Heart right ventricle (tissue), 16 donors: ENCODE measurements at regions of chr17 and their contacts with region 1.

Region 1: GRCh38 chr17:13002766-13003451 is 14.9 kb downstream of the ELAC2 start:
- DNase-seq: peak; percentile 77 to 81
- ATAC-seq: peak; percentile 81 to 95 (median 88)
- H3K4me3 ChIP-seq: no peak overlapping the region
- H3K27ac ChIP-seq: no peak overlapping the region
- H3K4me1 ChIP-seq: peaks cover 0 to 6% (median 0%) of the 10 kb centered on the region in 9 donors
- H3K27me3 ChIP-seq: no peaks in the 10 kb centered on the region
- CTCF ChIP-seq: peak; percentile 69 to 90 (median 83)

Region 2: DNA sequence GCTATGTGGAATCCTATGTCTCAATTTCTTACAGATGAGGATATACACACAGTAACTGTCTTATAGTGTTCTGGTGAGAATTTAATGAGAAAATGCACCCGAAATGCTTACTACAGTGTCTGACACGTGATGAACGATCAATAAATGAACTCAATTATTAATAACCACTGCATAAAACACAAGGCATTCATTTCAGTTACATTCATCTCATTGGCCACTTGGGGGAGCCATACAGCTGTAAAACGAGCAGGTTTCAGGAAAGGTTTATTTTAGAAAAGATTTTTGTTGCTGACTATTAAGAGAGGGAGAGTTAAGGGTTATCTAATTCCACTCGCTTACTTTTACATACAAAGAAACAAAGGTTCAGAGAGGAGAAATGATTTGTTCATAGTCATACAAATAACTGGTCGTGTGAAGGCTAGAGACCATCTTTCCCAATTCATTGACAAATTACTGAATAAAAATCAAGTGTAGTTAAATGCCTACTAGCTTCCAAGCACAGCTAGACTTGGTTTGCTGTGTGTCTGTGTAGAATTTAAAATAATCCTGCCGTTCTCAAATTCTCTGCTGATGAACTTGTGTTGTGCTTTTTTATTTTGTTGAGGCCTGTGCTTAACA is 822.2 kb before region 1 on chr17:
- intact Hi-C with region 1: loop called (anchors 2 to 10 kb)
- DNase-seq: peak in 1 of 2 donors; percentile 36
- ATAC-seq: peak in 2 of 8 donors; percentile 31 to 56
- H3K4me3 ChIP-seq: no peak overlapping the region
- H3K27ac ChIP-seq: no peak overlapping the region
- H3K4me1 ChIP-seq: no peaks in the 10 kb centered on the region
- H3K27me3 ChIP-seq: no peaks in the 10 kb centered on the region
- CTCF ChIP-seq: peak; percentile 48 to 79 (median 73)

Region 3: GRCh38 chr17:12536472-12536871 is 466.4 kb before region 1 on chr17:
- intact Hi-C with region 1: loop called in 2 of 10 experiments (anchors 10 kb)
- DNase-seq: no peak
- ATAC-seq: no peak
- H3K4me3 ChIP-seq: no peak overlapping the region
- H3K27ac ChIP-seq: no peak overlapping the region
- H3K4me1 ChIP-seq: no peaks in the 10 kb centered on the region
- H3K27me3 ChIP-seq: no peaks in the 10 kb centered on the region
- CTCF ChIP-seq: no peak

Region 4: GRCh38 chr17:12667299-12667958 is 335.5 kb before region 1 on chr17:
- intact Hi-C with region 1: loop called in 6 of 10 experiments (anchors 5 to 10 kb)
- DNase-seq: peak in 1 of 2 donors; percentile 54
- ATAC-seq: peak; percentile 65 to 84 (median 74)
- H3K4me3 ChIP-seq: peak overlapping the region; percentile 35 to 79 (median 67)
- H3K27ac ChIP-seq: peak overlapping the region; percentile 70 to 87 (median 78)
- H3K4me1 ChIP-seq: peaks cover 0 to 32% (median 12%) of the 10 kb centered on the region in 9 donors
- H3K27me3 ChIP-seq: peaks cover 0 to 45% (median 19%) of the 10 kb centered on the region in 7 donors
- CTCF ChIP-seq: peak in 8 of 9 donors; percentile 12 to 68 (median 51)

Region 5: DNA sequence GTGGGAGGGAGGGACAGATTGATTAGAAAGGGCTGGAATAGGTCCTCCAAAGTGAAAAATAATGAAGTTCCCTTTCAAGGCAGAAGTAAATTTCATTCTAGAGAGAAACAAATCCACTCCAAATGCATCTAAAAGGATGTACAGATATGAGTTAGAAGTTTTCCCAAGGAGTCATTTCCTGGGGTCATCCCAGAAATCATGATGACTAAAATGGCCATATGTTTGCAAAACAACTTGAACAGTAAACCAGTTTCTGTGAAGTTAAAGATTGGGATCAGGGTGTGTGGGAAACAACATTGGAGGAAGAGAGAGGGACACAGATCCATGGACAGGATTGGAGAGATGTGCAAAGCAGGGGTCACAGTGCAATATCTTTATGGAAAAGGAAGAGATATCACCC is 246.1 kb before region 1 on chr17:
- intact Hi-C with region 1: loop called in 2 of 10 experiments (anchors 10 kb)
- DNase-seq: no peak
- ATAC-seq: no peak
- H3K4me3 ChIP-seq: no peak overlapping the region
- H3K27ac ChIP-seq: peak overlapping the region in 1 of 10 donors; percentile 6
- H3K4me1 ChIP-seq: no peaks in the 10 kb centered on the region
- H3K27me3 ChIP-seq: no peaks in the 10 kb centered on the region
- CTCF ChIP-seq: no peak

Region 6: GRCh38 chr17:12928741-12929140 is 74.2 kb before region 1 on chr17:
- intact Hi-C with region 1: loop called in 3 of 10 experiments (anchors 5 to 10 kb)
- DNase-seq: no peak
- ATAC-seq: peak in 3 of 8 donors; percentile 44 to 53 (median 47)
- H3K4me3 ChIP-seq: no peak overlapping the region
- H3K27ac ChIP-seq: peak overlapping the region in 4 of 10 donors; percentile 3 to 61 (median 58)
- H3K4me1 ChIP-seq: peaks cover 0 to 24% (median 8%) of the 10 kb centered on the region in 9 donors
- H3K27me3 ChIP-seq: no peaks in the 10 kb centered on the region
- CTCF ChIP-seq: peak in 5 of 9 donors; percentile 15 to 30 (median 28)

Region 7: DNA sequence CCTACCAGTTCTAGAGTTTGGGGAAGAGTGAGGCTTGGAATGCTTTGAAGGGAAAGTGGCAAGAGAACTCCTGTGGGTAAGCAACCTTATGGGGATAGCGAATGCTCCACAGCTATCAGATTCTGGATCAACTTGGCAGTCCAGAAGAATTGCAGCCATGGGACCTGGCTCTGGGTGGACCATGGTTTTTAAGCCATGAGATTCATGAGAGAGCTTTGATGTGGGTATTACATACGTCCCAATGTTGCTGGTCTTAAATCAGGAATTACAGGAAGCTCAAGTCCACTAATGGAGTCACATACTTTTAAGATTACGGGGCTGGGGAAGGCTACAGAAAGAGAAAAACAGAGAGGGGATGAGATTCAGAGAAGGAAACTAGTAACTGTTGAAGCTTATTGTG is 157.4 kb after region 1 on chr17:
- intact Hi-C with region 1: no loop called
- DNase-seq: no peak
- ATAC-seq: no peak
- H3K4me3 ChIP-seq: no peak overlapping the region
- H3K27ac ChIP-seq: no peak overlapping the region
- H3K4me1 ChIP-seq: no peaks in the 10 kb centered on the region
- H3K27me3 ChIP-seq: no peaks in the 10 kb centered on the region
- CTCF ChIP-seq: no peak